ENCODE measurements at regions of chr2 and their contacts with region 1.

Region 1: DNA sequence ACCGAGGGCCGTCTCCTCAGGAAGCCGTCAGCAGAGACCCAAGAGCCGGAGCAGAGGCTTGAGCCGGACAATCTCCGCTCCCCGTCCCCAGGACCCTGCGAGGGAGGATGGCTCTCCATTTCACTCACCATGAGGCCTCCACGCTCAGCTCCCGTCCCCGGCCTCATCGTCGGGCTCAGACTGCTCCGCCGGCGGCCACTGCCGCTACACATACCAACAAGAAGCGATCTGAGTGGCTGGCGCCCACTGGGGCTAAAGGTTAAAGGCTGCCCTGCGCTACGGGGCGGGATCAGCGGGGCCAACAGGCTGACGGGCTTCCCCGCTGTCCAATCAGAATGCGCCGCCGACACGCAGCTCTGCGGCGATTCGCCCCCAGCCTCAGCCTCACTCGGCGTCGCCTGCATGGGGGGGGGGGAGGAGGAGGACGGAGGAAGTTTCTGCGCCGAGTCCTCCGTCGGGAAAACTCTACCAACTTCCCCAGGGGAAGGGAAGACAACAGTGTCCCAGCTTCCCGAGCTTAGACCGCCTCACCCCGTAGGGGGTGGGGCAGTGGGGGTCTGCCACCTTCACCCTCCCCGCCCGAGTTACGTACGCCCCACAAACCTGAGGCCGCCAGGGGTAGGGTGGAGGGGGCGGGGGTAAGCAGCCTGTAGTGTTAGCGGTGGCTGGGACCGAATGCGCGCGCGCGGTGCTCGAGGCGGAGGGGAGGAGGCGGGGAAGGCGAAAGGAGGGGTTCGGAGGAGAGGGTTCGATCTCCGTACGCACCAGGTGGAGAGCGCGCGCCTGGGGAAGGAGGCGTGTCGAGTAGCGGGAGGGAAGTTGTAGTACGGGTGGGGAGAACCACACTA is at the start of gene PRPF40A:
- DNase-seq: peak; percentile 98
- ATAC-seq: peak; percentile 90
- H3K4me3 ChIP-seq: peak within 1 kb of the TSS; percentile 92
- H3K27ac ChIP-seq: peak within 1 kb of the TSS; percentile 96
- H3K4me1 ChIP-seq: peaks cover 2% of the 10 kb centered on the region; the same call in 1 of the 2 replicates
- H3K27me3 ChIP-seq: no peaks in the 10 kb centered on the region
- CTCF ChIP-seq: no peak
- POLR2A ChIP-seq: peak; percentile 82
- RAD21 ChIP-seq: no peak
- total RNA-seq, gene PRPF40A: 150 and 168 TPM in 2 replicates

Region 2: GRCh38 chr2:152175458-152176325 is 541.8 kb before region 1 on chr2 and contains the start of gene STAM2:
- CTCF ChIA-PET with region 1: no interaction called
- POLR2A ChIA-PET with region 1: no interaction called
- dilution Hi-C with region 1: no loop called
- in situ Hi-C with region 1: no loop called
- intact Hi-C with region 1: loop called (anchors 2 kb)
- DNase-seq: peak; percentile 88
- ATAC-seq: peak; percentile 89
- H3K4me3 ChIP-seq: peak within 1 kb of the TSS; percentile 86
- H3K27ac ChIP-seq: peak within 1 kb of the TSS; percentile 97
- H3K4me1 ChIP-seq: peaks cover 2% of the 10 kb centered on the region
- H3K27me3 ChIP-seq: no peaks in the 10 kb centered on the region
- CTCF ChIP-seq: peak; percentile 99
- POLR2A ChIP-seq: peak; percentile 92
- RAD21 ChIP-seq: peak; percentile 87
- total RNA-seq, gene STAM2: 29.2 and 55.0 TPM in 2 replicates

Region 3: DNA sequence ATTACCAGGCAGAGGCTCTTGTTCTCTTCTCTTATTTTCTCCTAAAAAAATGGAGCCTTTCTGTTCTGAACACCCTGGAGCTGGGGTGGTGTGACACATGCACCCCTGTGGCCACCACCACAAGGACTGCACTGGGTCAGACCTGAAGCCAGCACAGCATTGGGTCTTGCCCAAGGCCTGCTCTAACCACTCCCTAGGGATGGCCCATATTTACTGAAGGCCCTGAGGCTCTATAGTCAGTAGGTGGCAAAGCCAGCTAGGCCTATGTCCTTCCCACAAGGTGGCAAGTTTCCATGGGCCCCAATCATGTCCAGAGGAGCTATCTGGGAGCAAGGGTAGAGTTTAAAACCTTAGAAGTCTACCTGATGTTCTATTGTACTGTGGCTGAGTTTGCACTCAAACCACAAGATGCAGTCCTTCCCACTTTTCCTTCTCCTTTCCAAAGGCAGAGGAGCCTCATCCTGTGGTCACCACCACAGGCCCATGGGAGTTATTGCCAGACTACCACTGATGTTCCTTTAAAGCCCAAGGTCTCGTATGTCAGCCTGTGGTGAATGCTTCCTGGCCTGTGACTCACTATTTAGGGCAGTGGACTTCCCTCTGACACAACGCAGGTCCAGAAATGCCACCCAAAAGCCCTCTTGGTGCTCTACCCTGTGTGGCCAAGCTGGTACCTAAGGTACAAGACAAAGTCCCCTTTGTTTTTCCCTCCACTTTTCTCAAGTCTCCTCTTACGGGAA is 397.5 kb before region 1 on chr2:
- CTCF ChIA-PET with region 1: no interaction called
- POLR2A ChIA-PET with region 1: no interaction called
- dilution Hi-C with region 1: no loop called
- in situ Hi-C with region 1: no loop called
- intact Hi-C with region 1: no loop called
- DNase-seq: peak; percentile 23
- ATAC-seq: no peak
- H3K4me3 ChIP-seq: no peak overlapping the region
- H3K27ac ChIP-seq: no peak overlapping the region
- H3K4me1 ChIP-seq: peaks cover 3% of the 10 kb centered on the region
- H3K27me3 ChIP-seq: no peaks in the 10 kb centered on the region
- CTCF ChIP-seq: no peak
- POLR2A ChIP-seq: no peak
- RAD21 ChIP-seq: no peak

Region 4: GRCh38 chr2:152762202-152762601 is 44.8 kb after region 1 on chr2:
- CTCF ChIA-PET with region 1: no interaction called
- POLR2A ChIA-PET with region 1: interaction called, 17 read pairs
- dilution Hi-C with region 1: no loop called
- in situ Hi-C with region 1: no loop called
- intact Hi-C with region 1: no loop called
- DNase-seq: peak; percentile 96
- ATAC-seq: peak; percentile 81
- H3K4me3 ChIP-seq: no peak overlapping the region
- H3K27ac ChIP-seq: peak overlapping the region; percentile 68; the same call in 1 of the 2 replicates
- H3K4me1 ChIP-seq: peaks cover 9% of the 10 kb centered on the region
- H3K27me3 ChIP-seq: no peaks in the 10 kb centered on the region
- CTCF ChIP-seq: no peak
- POLR2A ChIP-seq: no peak
- RAD21 ChIP-seq: no peak